GM12878 (cell line): ENCODE measurements at regions of chr1 and their contacts with region 1.

Region 1: DNA sequence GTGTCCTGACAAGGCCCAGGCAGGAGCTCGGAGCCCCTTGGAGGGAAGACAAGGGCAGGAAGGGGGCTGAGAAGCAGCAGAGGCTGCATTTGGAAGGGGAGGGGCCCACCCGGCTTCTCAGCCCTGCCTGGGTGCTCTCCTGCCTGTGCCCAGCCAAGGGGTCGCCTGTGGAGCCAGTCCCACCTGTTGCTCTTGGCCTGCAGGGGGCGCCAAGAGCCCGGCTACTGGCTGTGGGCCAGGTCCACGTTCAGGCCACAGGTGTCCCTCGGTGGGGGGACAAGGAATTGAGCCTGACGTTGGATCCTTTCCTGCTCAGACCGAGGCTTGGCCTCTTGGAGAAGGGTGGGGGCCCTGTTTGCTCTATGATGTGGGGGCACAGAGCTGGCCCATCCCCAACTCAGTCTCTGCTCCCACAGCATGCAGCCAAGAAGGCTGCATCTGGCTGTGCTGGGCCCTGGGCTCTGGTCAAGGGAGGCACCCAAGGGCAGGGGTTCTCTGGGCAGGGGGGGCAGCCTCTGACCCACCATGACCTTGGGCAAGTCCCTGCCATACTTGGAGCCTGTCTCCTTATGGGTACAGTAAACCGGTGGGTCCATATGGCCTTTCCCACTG is 10.9 kb downstream of the WNT4 start:
- DNase-seq: no peak
- ATAC-seq: peak; percentile 95
- H3K4me3 ChIP-seq: no peak overlapping the region
- H3K27ac ChIP-seq: no peak overlapping the region
- H3K4me1 ChIP-seq: no peaks in the 10 kb centered on the region
- H3K27me3 ChIP-seq: no peaks in the 10 kb centered on the region
- CTCF ChIP-seq: peak; percentile 86 to 96 (median 94); a peak in 5 of 6 replicates
- EP300 ChIP-seq: no peak
- POLR2A ChIP-seq: no peak
- RAD21 ChIP-seq: peak; percentile 98

Region 2: GRCh38 chr1:22275721-22276395 is 143.9 kb after region 1 on chr1:
- CTCF ChIA-PET with region 1: interaction called, 27 read pairs
- POLR2A ChIA-PET with region 1: no interaction called
- RAD21 ChIA-PET with region 1: interaction called, 4 read pairs
- SMC1A ChIA-PET with region 1: interaction called, 6 read pairs
- in situ Hi-C with region 1: loop called (anchors 5 kb)
- intact Hi-C with region 1: loop called (anchors 1 kb)
- DNase-seq: no peak
- ATAC-seq: peak; percentile 96
- H3K4me3 ChIP-seq: no peak overlapping the region
- H3K27ac ChIP-seq: no peak overlapping the region
- H3K4me1 ChIP-seq: no peaks in the 10 kb centered on the region
- H3K27me3 ChIP-seq: peaks cover 0 to 3% of the 10 kb centered on the region in 2 experiments
- CTCF ChIP-seq: peak; percentile 82 to 93 (median 86)
- EP300 ChIP-seq: no peak
- POLR2A ChIP-seq: no peak
- RAD21 ChIP-seq: peak; percentile 67

Region 3: DNA sequence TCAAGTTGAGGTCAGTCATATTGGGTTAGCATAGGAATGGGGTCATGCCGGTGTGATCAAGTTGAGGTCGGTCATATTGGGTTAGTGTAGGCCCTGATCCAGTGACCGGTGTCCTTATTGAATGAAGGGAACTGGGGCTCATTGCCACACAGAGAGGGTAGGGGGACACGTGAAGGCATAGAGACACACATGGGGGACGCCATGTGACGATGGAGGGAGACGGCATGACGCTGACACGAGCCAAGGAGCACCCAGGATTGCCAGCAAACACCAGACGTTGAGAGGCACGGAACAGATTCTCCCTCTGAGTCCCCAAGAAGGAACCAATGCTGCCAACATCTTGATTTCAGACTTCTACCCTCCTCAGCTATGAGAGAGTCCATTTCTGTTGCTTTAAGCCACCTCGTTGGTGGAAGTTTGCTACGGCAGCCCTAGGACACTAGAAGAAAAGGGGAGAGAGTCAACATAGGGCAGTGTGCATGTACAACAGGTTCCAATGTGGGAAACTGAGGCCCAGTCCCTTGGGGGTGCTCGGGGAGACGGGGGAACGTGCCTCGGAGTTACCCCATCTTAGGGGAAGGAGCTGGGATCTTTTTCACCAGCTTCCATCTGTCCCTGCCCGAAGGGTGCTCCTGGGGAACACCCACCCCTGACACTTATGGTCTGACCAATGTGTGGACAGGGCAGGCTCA is 182.9 kb after region 1 on chr1:
- CTCF ChIA-PET with region 1: no interaction called
- POLR2A ChIA-PET with region 1: no interaction called
- RAD21 ChIA-PET with region 1: no interaction called
- SMC1A ChIA-PET with region 1: no interaction called
- in situ Hi-C with region 1: no loop called
- intact Hi-C with region 1: loop called (anchors 5 kb)
- DNase-seq: no peak
- ATAC-seq: no peak
- H3K4me3 ChIP-seq: no peak overlapping the region
- H3K27ac ChIP-seq: no peak overlapping the region
- H3K4me1 ChIP-seq: no peaks in the 10 kb centered on the region
- H3K27me3 ChIP-seq: no peaks in the 10 kb centered on the region; a peak in 1 of 4 replicates
- CTCF ChIP-seq: no peak
- EP300 ChIP-seq: no peak
- POLR2A ChIP-seq: no peak
- RAD21 ChIP-seq: no peak

Region 4: GRCh38 chr1:22503721-22504410 is 371.9 kb after region 1 on chr1:
- CTCF ChIA-PET with region 1: no interaction called
- POLR2A ChIA-PET with region 1: no interaction called
- RAD21 ChIA-PET with region 1: no interaction called
- SMC1A ChIA-PET with region 1: no interaction called
- in situ Hi-C with region 1: no loop called
- intact Hi-C with region 1: no loop called
- DNase-seq: no peak
- ATAC-seq: no peak
- H3K4me3 ChIP-seq: no peak overlapping the region
- H3K27ac ChIP-seq: no peak overlapping the region
- H3K4me1 ChIP-seq: no peaks in the 10 kb centered on the region
- H3K27me3 ChIP-seq: no peaks in the 10 kb centered on the region
- CTCF ChIP-seq: no peak
- EP300 ChIP-seq: no peak
- POLR2A ChIP-seq: no peak
- RAD21 ChIP-seq: no peak

Region 5: DNA sequence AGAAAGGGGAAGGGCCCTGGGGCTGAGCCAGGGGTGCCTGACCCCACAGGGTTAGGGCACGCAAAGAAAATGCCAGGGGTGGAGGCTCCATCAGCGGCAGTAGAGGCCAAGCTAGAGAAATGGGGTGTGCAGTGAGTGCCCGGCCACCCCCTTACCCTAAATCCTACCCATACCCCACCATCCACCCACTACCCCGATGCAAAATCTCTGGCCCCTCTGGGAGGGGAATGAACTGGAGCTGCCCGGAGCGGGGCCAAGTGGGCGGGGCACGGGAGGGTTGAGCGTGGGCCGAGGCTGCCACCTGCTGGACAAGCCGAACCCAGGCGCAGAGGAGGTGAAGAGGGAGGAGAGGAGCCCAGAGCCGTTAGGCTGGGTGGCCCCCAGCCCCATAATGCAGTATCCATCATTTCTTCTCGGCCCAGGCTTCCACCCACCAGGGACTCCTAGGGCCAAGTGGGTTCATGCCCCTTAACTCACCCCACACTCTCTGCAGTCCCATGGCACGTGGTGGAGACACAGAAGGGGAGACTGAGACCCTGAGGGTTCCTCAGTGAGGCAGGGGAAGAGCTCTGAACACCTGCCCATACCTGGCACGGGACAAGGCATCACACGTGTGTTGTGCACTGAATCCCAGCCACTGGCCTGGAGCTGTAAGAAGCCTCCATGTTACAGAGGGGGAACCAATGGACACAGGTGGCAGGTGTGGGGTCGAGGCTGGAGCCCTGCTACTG is 510.1 kb after region 1 on chr1:
- CTCF ChIA-PET with region 1: no interaction called
- POLR2A ChIA-PET with region 1: no interaction called
- RAD21 ChIA-PET with region 1: no interaction called
- SMC1A ChIA-PET with region 1: no interaction called
- in situ Hi-C with region 1: loop called (anchors 5 kb)
- intact Hi-C with region 1: loop called (anchors 5 kb)
- DNase-seq: no peak
- ATAC-seq: peak; percentile 98
- H3K4me3 ChIP-seq: no peak overlapping the region
- H3K27ac ChIP-seq: no peak overlapping the region
- H3K4me1 ChIP-seq: no peaks in the 10 kb centered on the region
- H3K27me3 ChIP-seq: no peaks in the 10 kb centered on the region; a peak in 1 of 4 replicates
- CTCF ChIP-seq: peak; percentile 83 to 93 (median 89)
- EP300 ChIP-seq: no peak
- POLR2A ChIP-seq: no peak
- RAD21 ChIP-seq: peak; percentile 77